Cardiac septum (tissue), 1 donor: ENCODE measurements at regions of chr2 and their contacts with region 1.

Region 1: DNA sequence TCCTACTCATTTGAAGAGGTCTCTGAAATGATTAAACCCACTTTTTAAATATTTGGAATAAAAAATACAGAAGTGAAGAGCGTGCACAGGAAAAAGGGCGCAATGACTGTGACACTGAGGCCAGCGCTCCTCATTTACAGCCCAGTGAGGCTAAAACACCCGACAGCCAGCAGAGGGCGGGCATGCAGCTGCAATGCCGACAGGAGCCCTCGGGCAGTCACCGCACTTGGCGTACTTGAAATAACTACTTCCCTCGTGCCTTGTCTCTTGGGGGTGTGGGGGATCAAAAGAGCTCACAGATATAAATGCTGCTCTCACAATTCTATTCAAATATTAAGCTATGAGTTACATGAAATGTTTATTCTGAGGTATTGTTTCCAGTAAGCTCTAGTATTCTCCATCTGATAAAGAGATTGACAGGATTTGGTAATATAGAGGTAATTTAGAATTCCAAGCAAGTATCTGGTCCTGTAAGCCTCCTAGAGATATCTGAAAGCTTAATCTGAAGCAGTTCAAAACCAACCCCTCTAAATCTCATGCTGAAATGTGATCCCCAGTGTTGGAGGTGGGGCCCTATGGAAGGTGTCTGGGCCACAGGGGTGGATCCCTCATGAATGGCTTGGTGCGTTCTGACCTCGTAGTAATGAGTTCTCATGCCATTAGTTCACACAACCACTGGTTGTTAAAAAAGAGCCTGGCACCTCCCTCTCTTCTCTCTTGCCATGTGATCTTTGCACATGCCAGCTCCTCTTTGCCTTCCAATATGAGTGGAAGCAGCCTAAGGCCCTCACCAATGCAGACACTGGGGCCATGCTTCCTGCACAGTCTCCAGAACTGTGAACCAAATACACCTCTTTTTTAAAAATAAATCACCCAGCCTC is 93.6 kb downstream of the ZAP70 start:
- DNase-seq: peak; percentile 90

Region 2: GRCh38 chr2:97995734-97996624 is 189.0 kb after region 1 on chr2 and contains the start of gene TMEM131:
- intact Hi-C with region 1: loop called (anchors 5 kb)
- DNase-seq: peak; percentile 98
- total RNA-seq, gene TMEM131: 28.6 TPM

Region 3: DNA sequence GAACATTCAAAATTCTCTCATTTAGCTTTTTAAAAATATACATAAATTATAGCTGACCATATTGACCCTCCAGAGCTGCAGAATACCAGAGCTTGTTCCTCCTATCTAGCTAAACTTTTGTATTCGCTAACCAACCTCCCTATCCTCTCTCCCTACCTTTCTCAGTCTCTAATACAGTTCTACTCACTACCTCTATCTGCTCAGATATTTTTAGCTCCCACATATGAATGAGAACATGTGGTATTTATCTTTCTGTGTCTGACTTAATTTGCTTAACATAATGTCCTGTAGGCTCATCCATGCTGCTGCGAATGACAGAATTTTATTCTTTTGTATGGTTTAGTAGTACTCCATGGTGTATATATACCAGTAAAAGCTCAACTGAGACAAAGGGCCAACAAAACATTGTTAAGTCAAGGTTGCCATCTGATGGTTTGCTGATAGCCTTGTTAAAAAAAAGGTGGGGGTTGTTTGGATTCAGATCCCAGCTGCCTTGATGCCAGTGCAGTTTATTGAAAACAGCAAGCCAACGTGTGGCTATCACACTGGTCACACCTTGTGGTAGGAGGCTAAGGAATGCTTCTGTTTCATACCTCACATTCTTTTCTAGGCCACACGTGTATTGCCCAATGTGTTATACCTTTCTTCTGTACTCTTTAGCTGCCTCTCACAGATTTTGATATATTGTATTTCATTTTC is 381.5 kb after region 1 on chr2:
- intact Hi-C with region 1: loop called (anchors 5 kb)
- DNase-seq: no peak

Region 4: DNA sequence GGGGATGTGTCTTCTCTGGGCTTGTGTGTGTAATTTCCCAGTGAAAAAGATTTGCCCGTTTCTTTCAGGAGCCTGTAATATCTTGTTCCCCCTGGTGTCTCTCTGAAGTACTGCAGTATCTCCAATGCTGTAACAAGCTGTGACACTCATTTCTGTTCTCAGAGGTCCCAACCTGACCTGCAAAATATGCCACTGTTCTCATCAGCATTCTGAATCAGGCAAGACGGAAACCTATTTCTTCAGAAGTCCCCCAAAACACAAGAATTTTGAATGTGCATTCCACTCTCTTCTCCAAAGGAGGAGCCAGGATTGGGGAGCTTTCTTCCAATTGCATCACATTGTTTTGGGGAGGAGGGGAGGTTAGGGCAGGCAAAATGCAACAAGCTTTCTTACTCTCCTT is 462.3 kb after region 1 on chr2:
- intact Hi-C with region 1: loop called (anchors 2 kb)
- DNase-seq: no peak

Region 5: DNA sequence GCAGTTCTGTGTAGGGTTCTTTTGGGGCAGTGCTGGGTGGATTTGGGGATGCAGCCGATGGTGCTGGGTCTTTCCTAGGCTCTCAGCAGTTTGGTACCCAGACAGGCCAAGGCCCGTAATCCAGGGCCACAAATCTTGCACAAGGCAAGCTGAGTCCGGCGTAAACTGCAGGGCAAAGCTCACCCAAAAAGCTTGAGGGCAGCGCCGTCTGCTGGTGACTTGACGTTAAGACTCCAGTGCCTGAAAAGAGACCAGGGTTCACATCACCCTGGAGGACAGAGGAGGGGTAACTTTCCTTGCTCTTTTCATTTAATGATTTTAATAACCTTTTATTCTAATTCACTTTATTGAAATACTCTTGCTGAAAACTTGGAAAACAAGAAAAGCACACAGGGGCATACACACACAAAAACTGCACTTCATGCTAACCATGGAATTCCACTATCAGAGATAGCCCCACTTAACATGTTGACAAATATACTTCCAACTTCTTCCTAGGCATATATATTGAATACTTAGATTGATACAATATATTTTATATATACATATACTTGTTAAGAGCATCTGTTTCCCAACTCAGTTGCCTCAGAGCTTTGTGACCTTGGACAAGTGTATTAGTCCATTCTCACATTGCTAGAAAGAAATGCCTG is 578.2 kb after region 1 on chr2:
- intact Hi-C with region 1: loop called (anchors 2 kb)
- DNase-seq: peak; percentile 86